Activated naive CD4-positive, alpha-beta T cell treated with anti-CD3 and anti-CD28 coated beads for 36 hours (primary cell): ENCODE measurements at regions of chr6 and their contacts with region 1.

Region 1: GRCh38 chr6:119313937-119314884 is 35.4 kb downstream of the MAN1A1 start:
- DNase-seq: peak; percentile 65
- H3K4me3 Mint-ChIP-seq: peak overlapping the region; percentile 41
- H3K27ac Mint-ChIP-seq: peak overlapping the region; percentile 92
- H3K4me1 Mint-ChIP-seq: peaks cover 58% of the 10 kb centered on the region
- H3K27me3 Mint-ChIP-seq: no peaks in the 10 kb centered on the region

Region 2: GRCh38 chr6:118660218-118660569 is 654.0 kb before region 1 on chr6:
- CTCF ChIA-PET with region 1: no interaction called
- intact Hi-C with region 1: loop called (anchors 5 kb)
- DNase-seq: peak; percentile 65
- H3K4me3 Mint-ChIP-seq: peak overlapping the region; percentile 44
- H3K27ac Mint-ChIP-seq: peak overlapping the region; percentile 84
- H3K4me1 Mint-ChIP-seq: peaks cover 69% of the 10 kb centered on the region
- H3K27me3 Mint-ChIP-seq: no peaks in the 10 kb centered on the region

Region 3: GRCh38 chr6:118934461-118935330 is 379.5 kb before region 1 on chr6 and contains the start of gene MCM9:
- CTCF ChIA-PET with region 1: no interaction called
- intact Hi-C with region 1: loop called (anchors 1 kb)
- DNase-seq: peak; percentile 89
- H3K4me3 Mint-ChIP-seq: peak within 1 kb of the TSS; percentile 87
- H3K27ac Mint-ChIP-seq: peak within 1 kb of the TSS; percentile 90
- H3K4me1 Mint-ChIP-seq: peaks cover 29% of the 10 kb centered on the region
- H3K27me3 Mint-ChIP-seq: no peaks in the 10 kb centered on the region
- total RNA-seq, gene MCM9: 16.3 to 16.4 TPM

Region 4: GRCh38 chr6:119052292-119052889 is 261.8 kb before region 1 on chr6:
- CTCF ChIA-PET with region 1: no interaction called
- intact Hi-C with region 1: loop called (anchors 1 kb)
- DNase-seq: peak; percentile 69
- H3K4me3 Mint-ChIP-seq: no peak overlapping the region
- H3K27ac Mint-ChIP-seq: peak overlapping the region; percentile 30
- H3K4me1 Mint-ChIP-seq: peaks cover 30% of the 10 kb centered on the region
- H3K27me3 Mint-ChIP-seq: no peaks in the 10 kb centered on the region

Region 5: DNA sequence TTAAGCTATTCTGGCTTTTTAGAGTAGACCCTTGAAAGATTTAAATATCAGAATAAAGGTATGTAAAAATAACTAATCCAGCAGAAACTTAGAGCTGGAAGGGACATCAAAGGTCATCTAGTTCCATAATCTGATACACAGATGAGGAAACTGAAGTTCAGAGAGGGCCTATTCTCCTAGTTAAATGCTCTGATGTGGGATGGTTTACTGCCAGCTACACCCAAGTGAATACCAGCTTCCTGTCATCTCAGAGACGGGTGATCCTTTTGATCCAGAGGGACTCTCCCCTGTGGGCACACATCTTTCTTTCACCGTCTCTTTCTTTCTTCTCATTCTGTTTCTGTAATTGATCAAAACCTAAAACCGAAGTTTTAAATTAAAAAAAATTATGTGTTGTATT is 58.7 kb before region 1 on chr6:
- CTCF ChIA-PET with region 1: interaction called, 3 read pairs
- intact Hi-C with region 1: loop called (anchors 1 kb)
- DNase-seq: peak; percentile 37
- H3K4me3 Mint-ChIP-seq: no peak overlapping the region
- H3K27ac Mint-ChIP-seq: no peak overlapping the region
- H3K4me1 Mint-ChIP-seq: peaks cover 18% of the 10 kb centered on the region
- H3K27me3 Mint-ChIP-seq: no peaks in the 10 kb centered on the region

Region 6: DNA sequence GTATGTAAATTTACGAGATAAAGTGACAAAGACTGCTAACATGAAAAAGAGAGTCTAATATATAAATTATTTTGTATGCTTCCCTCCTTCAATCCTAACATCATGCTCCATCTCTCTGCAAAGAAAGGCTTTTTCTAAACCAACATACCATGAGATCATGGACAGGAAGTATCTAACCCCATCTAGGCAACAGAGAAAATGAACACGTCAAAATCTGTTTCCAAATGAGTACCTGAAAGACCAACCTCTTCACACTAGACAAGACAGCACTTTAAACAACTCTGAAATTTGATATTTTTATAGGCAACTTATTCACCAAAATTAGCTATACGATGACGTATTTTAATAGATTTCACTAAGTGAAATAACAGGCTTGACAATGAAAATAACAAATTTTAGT is 19.2 kb before region 1 on chr6:
- CTCF ChIA-PET with region 1: interaction called, 4 read pairs
- intact Hi-C with region 1: loop called (anchors 1 kb)
- DNase-seq: no peak
- H3K4me3 Mint-ChIP-seq: no peak overlapping the region
- H3K27ac Mint-ChIP-seq: no peak overlapping the region
- H3K4me1 Mint-ChIP-seq: peaks cover 11% of the 10 kb centered on the region
- H3K27me3 Mint-ChIP-seq: no peaks in the 10 kb centered on the region

Region 7: DNA sequence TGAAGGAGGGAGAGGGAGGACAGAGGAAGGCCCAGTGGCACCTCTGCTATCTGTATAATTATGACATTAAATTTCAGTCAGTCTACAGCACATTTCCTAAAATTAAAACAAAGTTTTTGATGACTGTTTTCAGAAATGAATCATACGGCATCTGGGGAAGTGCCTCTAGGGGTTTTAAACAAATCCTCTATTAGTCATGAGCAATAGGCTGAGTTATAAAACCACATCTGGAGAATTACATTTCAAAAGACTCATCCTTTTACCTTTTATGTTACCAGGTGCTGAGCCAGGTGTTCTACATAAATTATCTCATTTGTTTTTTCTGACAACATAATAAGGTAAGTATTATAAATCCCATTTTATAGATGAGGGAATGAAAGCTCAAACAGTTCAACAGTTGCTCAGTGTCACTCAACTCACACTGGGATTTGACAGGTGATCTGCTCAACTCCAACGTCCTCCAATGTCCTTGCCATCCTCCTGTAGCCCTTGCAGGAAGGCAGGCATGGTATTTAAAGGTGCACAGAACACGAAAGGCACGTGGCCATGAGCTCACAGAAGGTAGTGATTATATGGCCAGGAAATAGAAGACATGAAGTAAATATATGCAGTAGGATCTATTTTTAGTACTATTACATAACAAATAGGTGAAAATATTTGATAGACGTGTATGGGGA is 219.5 kb after region 1 on chr6:
- CTCF ChIA-PET with region 1: no interaction called
- intact Hi-C with region 1: loop called (anchors 1 kb)
- DNase-seq: peak; percentile 16
- H3K4me3 Mint-ChIP-seq: no peak overlapping the region
- H3K27ac Mint-ChIP-seq: no peak overlapping the region
- H3K4me1 Mint-ChIP-seq: peaks cover 9% of the 10 kb centered on the region
- H3K27me3 Mint-ChIP-seq: peaks cover 6% of the 10 kb centered on the region